A673 (cell line): ENCODE measurements at regions of chr1 and their contacts with region 1.

Region 1: DNA sequence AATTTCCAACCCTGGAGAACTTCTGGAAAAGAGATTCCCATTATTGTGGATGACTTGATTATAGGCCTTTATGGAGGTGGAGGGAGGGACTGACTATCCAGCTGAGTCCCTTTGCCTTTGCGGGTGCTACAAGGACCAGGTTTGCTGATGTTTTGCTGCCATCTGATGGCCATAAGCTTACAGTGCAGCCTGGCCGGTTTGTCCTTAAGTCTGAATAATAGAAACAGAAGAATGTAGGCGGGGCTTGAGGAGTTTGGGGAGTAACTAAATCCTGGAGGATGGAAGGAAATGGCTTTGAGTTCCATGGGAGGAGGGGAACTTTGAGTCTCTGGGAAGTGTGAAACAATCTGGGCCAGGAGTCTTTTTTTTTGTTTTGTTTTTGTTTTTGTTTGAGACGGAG is 55.7 kb upstream of the CD1D start:
- DNase-seq: peak; percentile 98
- H3K4me3 ChIP-seq: no peak overlapping the region
- H3K27ac ChIP-seq: no peak overlapping the region
- H3K4me1 ChIP-seq: peaks cover 30% of the 10 kb centered on the region
- H3K27me3 ChIP-seq: no peaks in the 10 kb centered on the region
- CTCF ChIP-seq: peak; percentile 98

Region 2: GRCh38 chr1:157369808-157370521 is 755.0 kb before region 1 on chr1:
- CTCF ChIA-PET with region 1: no interaction called
- POLR2A ChIA-PET with region 1: no interaction called
- intact Hi-C with region 1: loop called (anchors 10 kb)
- DNase-seq: peak; percentile 75
- H3K4me3 ChIP-seq: no peak overlapping the region
- H3K27ac ChIP-seq: no peak overlapping the region
- H3K4me1 ChIP-seq: no peaks in the 10 kb centered on the region
- H3K27me3 ChIP-seq: no peaks in the 10 kb centered on the region
- CTCF ChIP-seq: peak; percentile 86

Region 3: GRCh38 chr1:157704878-157705277 is 420.1 kb before region 1 on chr1:
- CTCF ChIA-PET with region 1: no interaction called
- POLR2A ChIA-PET with region 1: no interaction called
- intact Hi-C with region 1: loop called (anchors 10 kb)
- DNase-seq: no peak
- H3K4me3 ChIP-seq: no peak overlapping the region
- H3K27ac ChIP-seq: no peak overlapping the region
- H3K4me1 ChIP-seq: no peaks in the 10 kb centered on the region
- H3K27me3 ChIP-seq: peaks cover 19% of the 10 kb centered on the region
- CTCF ChIP-seq: no peak

Region 4: GRCh38 chr1:157963713-157964112 is 161.3 kb before region 1 on chr1:
- CTCF ChIA-PET with region 1: interaction called, 165 read pairs
- POLR2A ChIA-PET with region 1: no interaction called
- intact Hi-C with region 1: loop called (anchors 1 kb)
- DNase-seq: peak; percentile 94
- H3K4me3 ChIP-seq: no peak overlapping the region
- H3K27ac ChIP-seq: peak overlapping the region; percentile 46
- H3K4me1 ChIP-seq: peaks cover 52% of the 10 kb centered on the region
- H3K27me3 ChIP-seq: no peaks in the 10 kb centered on the region
- CTCF ChIP-seq: peak; percentile 93

Region 5: DNA sequence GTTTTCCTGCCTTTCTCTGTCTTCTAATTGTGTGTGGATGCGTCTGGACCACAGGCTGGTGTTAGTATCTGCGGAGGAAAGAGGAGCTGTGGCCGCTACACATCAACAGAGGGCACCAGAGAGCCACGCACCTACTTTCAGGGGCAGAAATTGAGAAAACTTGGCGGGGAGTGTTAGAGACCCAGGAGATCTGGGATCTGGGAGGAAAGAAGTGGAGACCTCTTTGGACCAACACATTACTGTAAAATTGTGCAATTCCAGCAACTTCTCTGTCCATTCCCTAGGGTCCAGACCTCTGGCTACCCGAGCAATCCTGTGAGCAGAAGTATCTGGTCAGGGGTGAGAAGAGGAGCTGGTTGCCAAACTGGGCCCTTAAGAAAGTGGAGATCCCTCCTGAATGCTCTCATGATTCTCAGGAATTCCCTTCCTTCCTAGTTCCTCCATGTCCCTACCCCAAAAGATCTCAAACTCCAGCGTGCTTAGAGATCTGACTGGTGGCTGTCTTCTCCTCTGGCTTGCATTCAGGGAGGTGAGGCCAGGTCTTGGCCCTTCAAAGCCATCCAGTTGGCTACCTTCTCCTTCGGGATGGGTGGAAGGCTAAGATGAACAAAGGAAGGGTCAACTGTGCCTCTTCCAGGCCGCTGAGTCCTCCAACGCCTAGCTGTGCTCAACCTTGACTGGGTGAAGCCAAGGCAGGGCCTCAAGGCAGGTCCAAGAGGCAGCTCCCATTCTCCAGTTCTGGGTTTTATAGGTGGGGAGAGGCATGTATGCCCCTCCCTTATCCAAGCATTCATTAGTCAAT is 132.8 kb before region 1 on chr1:
- CTCF ChIA-PET with region 1: interaction called, 46 read pairs
- POLR2A ChIA-PET with region 1: interaction called, 3 read pairs
- intact Hi-C with region 1: loop called (anchors 1 kb)
- DNase-seq: peak; percentile 91
- H3K4me3 ChIP-seq: peak overlapping the region; percentile 97
- H3K27ac ChIP-seq: peak overlapping the region; percentile 99
- H3K4me1 ChIP-seq: peaks cover 30% of the 10 kb centered on the region
- H3K27me3 ChIP-seq: no peaks in the 10 kb centered on the region
- CTCF ChIP-seq: peak; percentile 99

Region 6: DNA sequence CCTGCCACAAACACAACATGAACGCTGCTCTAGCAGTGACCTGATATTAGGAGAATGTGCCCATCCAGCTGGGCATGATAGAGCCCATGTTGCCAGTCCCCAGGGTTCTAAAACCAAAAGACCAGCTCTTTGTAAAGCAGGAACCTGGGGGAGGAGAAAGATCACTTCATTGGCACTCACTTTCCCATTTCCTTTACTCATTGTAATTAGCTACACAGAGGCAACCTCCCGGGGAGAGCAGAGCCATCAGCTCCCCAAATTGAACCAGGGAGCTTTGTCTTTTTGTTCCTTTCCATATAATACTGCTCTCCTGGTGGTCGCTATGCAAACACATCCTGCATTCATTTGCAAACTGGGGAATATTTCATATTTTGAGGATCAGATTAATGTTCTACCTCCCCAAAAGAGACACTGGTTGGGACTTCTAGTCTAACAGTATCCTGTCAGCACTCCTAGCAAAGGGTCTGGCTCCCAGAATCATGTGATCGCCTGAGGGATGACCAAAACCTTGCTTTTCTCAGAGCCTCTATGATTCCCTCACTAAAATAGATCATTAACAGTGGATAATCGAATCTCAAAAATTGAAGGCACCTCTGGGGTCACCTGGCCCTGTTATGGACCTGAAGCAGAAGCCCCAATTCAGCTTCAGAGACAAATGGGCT is 21.0 kb before region 1 on chr1:
- CTCF ChIA-PET with region 1: interaction called, 88 read pairs
- POLR2A ChIA-PET with region 1: no interaction called
- intact Hi-C with region 1: no loop called
- DNase-seq: peak; percentile 93
- H3K4me3 ChIP-seq: no peak overlapping the region
- H3K27ac ChIP-seq: peak overlapping the region; percentile 66
- H3K4me1 ChIP-seq: peaks cover 72% of the 10 kb centered on the region
- H3K27me3 ChIP-seq: no peaks in the 10 kb centered on the region
- CTCF ChIP-seq: no peak

Region 7: DNA sequence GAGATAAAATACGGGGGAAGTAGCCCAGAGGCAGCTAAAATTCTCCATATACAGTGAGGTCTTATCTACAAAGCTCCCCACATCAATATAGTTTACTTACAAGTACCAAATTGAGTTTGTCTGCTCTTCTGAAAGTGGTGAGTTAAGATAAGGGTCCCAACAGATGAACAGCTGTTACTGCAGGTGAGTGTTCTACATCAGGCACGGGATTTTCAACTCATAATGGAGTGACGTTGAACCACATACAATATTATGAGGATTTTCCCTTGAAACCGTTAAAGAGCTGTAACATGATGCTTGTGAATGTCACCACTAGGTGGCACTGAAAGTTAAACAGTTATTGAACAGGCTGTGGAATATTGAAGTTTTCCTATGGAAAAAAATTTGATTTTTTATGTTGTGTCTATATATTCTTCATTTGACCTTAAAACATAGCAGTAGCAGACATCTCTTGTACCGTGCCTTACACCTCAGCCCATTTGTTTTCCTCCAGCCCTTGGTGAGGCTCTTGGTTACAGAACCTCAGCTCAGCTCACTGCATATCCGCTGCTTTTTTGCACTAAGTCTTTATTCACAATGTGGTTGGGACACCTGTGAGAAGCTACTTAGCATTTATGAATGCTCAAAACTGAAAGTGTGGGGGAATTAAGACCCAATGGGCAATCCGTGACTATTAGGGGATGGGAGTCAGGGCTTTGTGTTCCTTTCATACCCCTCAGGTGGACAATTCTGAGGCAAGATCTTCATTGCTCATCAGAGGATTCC is 78.9 kb after region 1 on chr1:
- CTCF ChIA-PET with region 1: no interaction called
- POLR2A ChIA-PET with region 1: no interaction called
- intact Hi-C with region 1: no loop called
- DNase-seq: peak; percentile 84
- H3K4me3 ChIP-seq: peak overlapping the region; percentile 28
- H3K27ac ChIP-seq: no peak overlapping the region
- H3K4me1 ChIP-seq: no peaks in the 10 kb centered on the region
- H3K27me3 ChIP-seq: peaks cover 28% of the 10 kb centered on the region
- CTCF ChIP-seq: peak; percentile 88